CD4-positive, alpha-beta T cell (primary cell): ENCODE measurements at regions of chrX and their contacts with region 1.

Region 1: DNA sequence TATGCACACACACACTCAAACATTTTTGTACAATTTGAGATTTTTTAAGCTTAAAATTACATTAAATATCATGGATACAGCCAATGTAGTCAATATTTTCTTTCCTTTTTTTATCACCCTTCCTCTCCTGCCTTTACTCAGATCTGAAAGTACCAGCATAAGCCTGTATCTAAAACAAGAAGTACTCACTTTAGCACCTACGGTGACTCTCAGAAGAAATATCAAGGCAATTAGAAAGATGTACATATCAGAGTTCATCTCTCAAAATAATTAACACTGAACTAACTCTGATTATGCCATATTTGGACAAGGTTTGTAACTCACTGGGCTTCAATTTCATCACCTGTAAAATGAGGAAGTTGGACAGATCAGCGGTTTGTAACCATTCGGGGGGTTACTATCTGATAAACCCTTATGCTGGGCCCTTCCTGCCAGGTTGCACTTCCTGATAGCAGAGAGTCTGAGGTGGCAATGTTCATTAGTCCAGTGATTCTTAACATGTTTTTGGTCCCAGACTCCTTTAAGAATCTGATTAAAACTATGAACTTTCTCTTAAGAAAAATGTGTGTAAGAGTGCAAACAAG is 5.7 kb upstream of the GPR174 start:
- DNase-seq: peak in 3 of 14 experiments; percentile 43 to 64 (median 53)
- ATAC-seq: no peak
- H3K4me3 ChIP-seq: no peak overlapping the region
- H3K4me3 Mint-ChIP-seq: peak overlapping the region; percentile 45
- H3K27ac ChIP-seq: peak overlapping the region in 1 of 2 donors; percentile 44
- H3K27ac Mint-ChIP-seq: peak overlapping the region; percentile 89
- H3K4me1 ChIP-seq: peaks cover 14% of the 10 kb centered on the region
- H3K4me1 Mint-ChIP-seq: peaks cover 64% of the 10 kb centered on the region
- H3K27me3 ChIP-seq: no peaks in the 10 kb centered on the region
- H3K27me3 Mint-ChIP-seq: no peaks in the 10 kb centered on the region
- CTCF ChIP-seq: no peak

Region 2: GRCh38 chrX:79096145-79096556 is 42.6 kb before region 1 on chrX:
- CTCF ChIA-PET with region 1: no interaction called
- POLR2A ChIA-PET with region 1: interaction called, 4 read pairs
- intact Hi-C with region 1: loop called in 1 of 2 experiments (anchors 5 kb)
- DNase-seq: peak in 3 of 14 experiments; percentile 44 to 68 (median 51)
- ATAC-seq: peak; percentile 57
- H3K4me3 ChIP-seq: peak overlapping the region; percentile 19
- H3K4me3 Mint-ChIP-seq: peak overlapping the region; percentile 69
- H3K27ac ChIP-seq: peak overlapping the region; percentile 62 to 80
- H3K27ac Mint-ChIP-seq: peak overlapping the region; percentile 96
- H3K4me1 ChIP-seq: peaks cover 21% of the 10 kb centered on the region
- H3K4me1 Mint-ChIP-seq: peaks cover 77% of the 10 kb centered on the region
- H3K27me3 ChIP-seq: no peaks in the 10 kb centered on the region
- H3K27me3 Mint-ChIP-seq: no peaks in the 10 kb centered on the region
- CTCF ChIP-seq: no peak

Region 3: DNA sequence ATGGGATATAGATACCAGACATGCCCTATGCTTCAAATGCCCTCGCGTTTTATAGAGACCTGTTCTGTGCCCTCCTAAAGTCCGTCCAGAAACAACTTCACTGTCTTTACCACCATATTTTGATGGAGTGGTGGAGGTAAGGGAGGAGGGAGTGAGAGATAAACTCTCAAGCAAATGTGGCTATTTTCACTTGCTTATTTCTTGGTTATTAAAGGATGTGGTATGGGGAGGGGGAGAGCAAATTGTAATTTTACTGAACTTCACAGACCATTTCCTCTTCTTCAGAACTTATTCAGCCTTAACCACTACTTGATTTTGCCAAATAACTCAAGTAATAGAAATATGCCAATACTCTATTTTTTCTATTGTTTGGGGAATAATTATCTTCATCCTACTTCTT is 37.3 kb after region 1 on chrX:
- CTCF ChIA-PET with region 1: interaction called, 3 read pairs
- POLR2A ChIA-PET with region 1: no interaction called
- intact Hi-C with region 1: loop called in 1 of 2 experiments (anchors 5 kb)
- DNase-seq: peak in 1 of 14 experiments; percentile 64
- ATAC-seq: no peak
- H3K4me3 ChIP-seq: no peak overlapping the region
- H3K4me3 Mint-ChIP-seq: peak overlapping the region; percentile 51
- H3K27ac ChIP-seq: no peak overlapping the region
- H3K27ac Mint-ChIP-seq: peak overlapping the region; percentile 77
- H3K4me1 ChIP-seq: peaks cover 21% of the 10 kb centered on the region
- H3K4me1 Mint-ChIP-seq: peaks cover 90% of the 10 kb centered on the region
- H3K27me3 ChIP-seq: no peaks in the 10 kb centered on the region
- H3K27me3 Mint-ChIP-seq: no peaks in the 10 kb centered on the region
- CTCF ChIP-seq: no peak

Region 4: DNA sequence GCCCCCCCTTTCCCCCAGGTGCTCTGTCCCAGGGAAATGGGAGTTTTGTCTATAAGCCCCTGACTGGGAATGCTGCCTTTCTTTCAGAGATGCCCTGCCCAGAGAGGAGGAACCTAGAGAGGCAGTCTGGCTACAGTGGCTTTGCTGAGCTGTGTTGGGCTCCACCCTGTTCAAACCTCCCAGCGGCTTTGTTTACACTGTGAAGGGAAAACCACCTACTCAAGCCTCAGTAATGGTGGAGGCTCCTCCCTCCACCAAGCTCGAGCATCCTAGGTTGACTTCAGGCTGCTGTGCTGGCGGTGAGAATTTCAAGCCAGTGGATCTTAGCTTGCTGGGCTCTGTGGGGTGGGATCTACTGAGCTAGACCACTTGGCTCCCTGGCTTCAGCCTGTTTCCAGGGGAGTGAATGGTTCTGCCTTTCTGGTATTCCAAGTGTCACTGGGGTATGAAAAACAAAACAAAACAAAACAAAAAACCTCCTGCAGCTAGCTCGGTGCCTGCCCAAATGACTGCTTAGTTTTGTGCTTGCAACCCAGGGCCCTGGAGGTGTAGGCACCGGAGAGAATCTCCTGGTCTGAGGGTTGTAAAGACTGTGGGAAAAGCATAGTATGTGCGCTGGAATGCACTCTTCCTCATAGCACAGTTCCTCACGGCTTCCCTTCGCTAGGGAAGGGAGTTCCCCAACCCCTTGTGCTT is 186.7 kb after region 1 on chrX:
- CTCF ChIA-PET with region 1: no interaction called
- POLR2A ChIA-PET with region 1: no interaction called
- intact Hi-C with region 1: no loop called
- DNase-seq: peak; percentile 22 to 74 (median 38)
- ATAC-seq: peak; percentile 97
- H3K4me3 ChIP-seq: peak overlapping the region; percentile 35
- H3K4me3 Mint-ChIP-seq: peak overlapping the region; percentile 71
- H3K27ac ChIP-seq: peak overlapping the region in 1 of 2 donors; percentile 44
- H3K27ac Mint-ChIP-seq: peak overlapping the region; percentile 92
- H3K4me1 ChIP-seq: peaks cover 10% of the 10 kb centered on the region
- H3K4me1 Mint-ChIP-seq: peaks cover 15% of the 10 kb centered on the region
- H3K27me3 ChIP-seq: no peaks in the 10 kb centered on the region
- H3K27me3 Mint-ChIP-seq: no peaks in the 10 kb centered on the region
- CTCF ChIP-seq: no peak